H1 (cell line): ENCODE measurements at regions of chr1 and their contacts with region 1.

Region 1: DNA sequence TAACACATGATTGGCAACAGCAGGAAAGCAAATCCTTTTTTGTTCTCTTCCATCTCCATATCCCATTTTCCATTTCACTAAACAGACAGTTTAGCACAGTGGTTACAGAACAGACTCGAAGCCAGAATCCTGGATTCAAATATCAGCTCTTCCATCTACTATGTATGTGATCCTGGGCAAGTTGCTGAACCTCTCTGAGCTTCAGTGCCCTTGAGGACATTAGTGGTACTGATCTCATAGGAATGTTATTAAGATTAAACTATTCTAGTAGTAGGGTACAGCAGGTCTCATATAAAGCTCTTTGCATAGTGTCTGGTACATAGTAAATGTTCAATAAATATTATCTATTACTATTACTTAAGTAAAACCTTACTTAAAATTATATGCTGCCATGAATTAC is 13.8 kb upstream of the HHIPL2 start:
- DNase-seq: no peak
- H3K4me3 ChIP-seq: no peak overlapping the region
- H3K27ac ChIP-seq: no peak overlapping the region
- H3K4me1 ChIP-seq: no peaks in the 10 kb centered on the region
- H3K27me3 ChIP-seq: peaks cover 0 to 1% (median 0%) of the 10 kb centered on the region in 4 experiments; a peak in 1 of 7 replicates
- CTCF ChIP-seq: no peak
- EP300 ChIP-seq: no peak
- POLR2A ChIP-seq: no peak
- RAD21 ChIP-seq: no peak

Region 2: GRCh38 chr1:222455188-222455879 is 106.3 kb before region 1 on chr1:
- CTCF ChIA-PET with region 1: no interaction called
- POLR2A ChIA-PET with region 1: no interaction called
- DNase-seq: peak; percentile 50 to 90
- H3K4me3 ChIP-seq: no peak overlapping the region
- H3K27ac ChIP-seq: no peak overlapping the region
- H3K4me1 ChIP-seq: no peaks in the 10 kb centered on the region; a peak in 2 of 7 replicates
- H3K27me3 ChIP-seq: no peaks in the 10 kb centered on the region
- CTCF ChIP-seq: peak; percentile 89 to 99 (median 94)
- EP300 ChIP-seq: no peak
- POLR2A ChIP-seq: no peak
- RAD21 ChIP-seq: peak; percentile 95 to 96

Region 3: GRCh38 chr1:222546548-222547259 is 15.0 kb before region 1 on chr1:
- CTCF ChIA-PET with region 1: interaction called, 20 read pairs
- POLR2A ChIA-PET with region 1: interaction called, 4 read pairs
- DNase-seq: no peak
- H3K4me3 ChIP-seq: no peak overlapping the region
- H3K27ac ChIP-seq: no peak overlapping the region
- H3K4me1 ChIP-seq: no peaks in the 10 kb centered on the region; a peak in 1 of 7 replicates
- H3K27me3 ChIP-seq: no peaks in the 10 kb centered on the region
- CTCF ChIP-seq: no peak
- EP300 ChIP-seq: no peak
- POLR2A ChIP-seq: no peak
- RAD21 ChIP-seq: no peak

Region 4: GRCh38 chr1:222589462-222590302 is 28.0 kb after region 1 on chr1 and contains the start of gene TAF1A:
- CTCF ChIA-PET with region 1: interaction called, 10 read pairs
- POLR2A ChIA-PET with region 1: no interaction called
- DNase-seq: peak; percentile 59 to 79
- H3K4me3 ChIP-seq: peak within 1 kb of the TSS; percentile 55 to 99 (median 78)
- H3K27ac ChIP-seq: peak within 1 kb of the TSS; percentile 48; the same call in 1 of the 2 replicates
- H3K4me1 ChIP-seq: peaks cover 0 to 3% (median 0%) of the 10 kb centered on the region in 4 experiments; a peak in 1 of 7 replicates
- H3K27me3 ChIP-seq: no peaks in the 10 kb centered on the region
- CTCF ChIP-seq: no peak
- EP300 ChIP-seq: no peak
- POLR2A ChIP-seq: peak in 1 of 2 experiments; percentile 63; a peak in 1 of 3 replicates
- RAD21 ChIP-seq: no peak; a peak in 1 of 4 replicates
- total RNA-seq, gene TAF1A: 15.9 and 16.7 TPM in 2 replicates